PC-3 (cell line): ENCODE measurements at regions of chr10 and their contacts with region 1.

Region 1: DNA sequence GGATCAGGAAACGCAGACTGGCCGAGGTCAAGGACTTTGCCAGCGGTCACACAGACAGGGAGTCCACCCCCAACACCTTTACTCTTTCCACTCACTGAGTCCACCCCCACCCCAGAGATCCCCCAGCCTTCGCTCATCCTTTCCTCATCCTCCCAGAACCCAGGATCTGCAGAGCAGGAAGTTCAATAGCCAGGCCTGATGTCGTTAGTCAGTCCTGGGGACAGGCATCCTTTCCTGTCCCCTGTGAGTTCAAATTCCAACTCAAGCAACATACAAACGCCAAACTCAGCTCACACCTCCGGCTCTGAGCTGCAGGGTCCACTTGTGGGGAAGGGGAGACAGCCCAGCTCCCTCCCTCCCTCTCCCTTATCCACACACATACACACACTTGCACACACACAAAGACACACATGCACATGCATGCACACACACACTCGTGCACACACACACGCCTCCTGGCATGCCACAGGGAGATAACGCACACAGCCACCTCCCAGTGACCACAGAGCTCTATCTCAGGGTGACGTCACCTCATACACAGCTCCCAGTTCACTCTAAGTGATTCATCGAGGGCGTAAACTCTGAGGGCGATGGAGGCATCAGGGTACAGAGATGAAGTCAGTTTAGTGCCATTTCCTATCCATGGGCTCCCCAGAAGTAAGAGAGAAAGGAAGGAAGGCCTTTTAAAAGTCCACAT is 23.9 kb downstream of the CALML3 start:
- DNase-seq: peak; percentile 79
- ATAC-seq: peak; percentile 7
- H3K4me3 ChIP-seq: peak overlapping the region; percentile 26; the same call in 1 of the 2 replicates
- H3K27ac ChIP-seq: peak overlapping the region; percentile 100
- H3K4me1 ChIP-seq: peaks cover 90% of the 10 kb centered on the region
- H3K27me3 ChIP-seq: no peaks in the 10 kb centered on the region
- CTCF ChIP-seq: no peak

Region 2: DNA sequence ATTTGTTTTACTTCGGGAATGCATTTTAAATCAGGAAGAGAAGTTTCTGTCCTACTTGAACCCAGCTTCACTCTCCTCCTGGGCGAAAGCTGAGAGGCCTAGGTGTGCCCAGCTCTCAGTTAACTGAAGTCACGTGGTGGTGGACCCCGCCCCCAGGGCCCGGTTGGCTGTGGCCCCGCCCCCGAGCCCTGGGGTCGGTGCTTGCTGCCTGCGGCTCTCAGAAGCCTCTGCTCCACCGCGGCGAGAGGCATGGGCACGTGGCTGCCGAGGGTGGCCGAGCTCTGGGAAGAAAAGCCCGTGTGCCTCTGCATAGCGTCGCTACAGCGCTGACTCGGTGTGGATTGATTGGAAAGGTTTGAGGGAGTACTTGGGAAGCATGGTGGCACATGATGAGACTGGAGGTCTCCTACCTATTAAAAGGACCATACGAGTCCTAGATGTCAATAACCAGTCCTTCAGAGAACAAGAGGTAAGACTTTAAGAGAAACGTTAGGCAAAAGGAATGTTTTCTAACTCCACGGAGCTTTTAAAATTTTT is 102.2 kb before region 1 on chr10:
- CTCF ChIA-PET with region 1: interaction called, 3 read pairs
- POLR2A ChIA-PET with region 1: interaction called, 8 read pairs
- intact Hi-C with region 1: loop called (anchors 1 kb)
- DNase-seq: peak; percentile 83
- ATAC-seq: peak; percentile 88
- H3K4me3 ChIP-seq: peak overlapping the region; percentile 92
- H3K27ac ChIP-seq: peak overlapping the region; percentile 37; the same call in 1 of the 2 replicates
- H3K4me1 ChIP-seq: peaks cover 8% of the 10 kb centered on the region; the same call in 1 of the 2 replicates
- H3K27me3 ChIP-seq: no peaks in the 10 kb centered on the region
- CTCF ChIP-seq: no peak

Region 3: DNA sequence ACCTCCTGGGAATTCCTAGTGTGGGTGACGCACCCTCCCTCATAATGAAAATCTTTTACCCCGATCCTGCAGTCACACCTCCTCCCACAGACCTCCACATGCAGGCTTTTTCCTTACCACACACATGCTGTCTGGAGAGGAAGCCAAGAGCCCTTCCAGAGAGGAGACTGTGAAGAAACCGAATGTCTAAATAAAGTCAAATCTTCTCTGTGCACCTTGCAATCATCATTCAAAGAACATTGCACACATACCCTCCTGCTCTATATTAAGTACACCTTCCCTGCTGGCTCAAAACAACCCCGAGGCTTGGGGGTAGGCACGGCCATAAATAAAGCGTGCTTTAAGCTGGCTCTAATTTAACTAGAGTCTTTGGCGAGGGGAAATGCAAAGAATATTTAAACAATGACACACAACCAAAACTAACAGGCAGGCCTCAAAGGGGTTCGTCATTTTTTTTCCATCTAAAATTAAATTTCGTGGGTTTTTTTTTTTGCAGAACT is 11.0 kb after region 1 on chr10:
- CTCF ChIA-PET with region 1: no interaction called
- POLR2A ChIA-PET with region 1: interaction called, 3 read pairs
- intact Hi-C with region 1: loop called (anchors 1 kb)
- DNase-seq: peak; percentile 68
- ATAC-seq: peak; percentile 68
- H3K4me3 ChIP-seq: peak overlapping the region; percentile 46; the same call in 1 of the 2 replicates
- H3K27ac ChIP-seq: peak overlapping the region; percentile 99
- H3K4me1 ChIP-seq: peaks cover 41% of the 10 kb centered on the region
- H3K27me3 ChIP-seq: no peaks in the 10 kb centered on the region
- CTCF ChIP-seq: no peak

Region 4: DNA sequence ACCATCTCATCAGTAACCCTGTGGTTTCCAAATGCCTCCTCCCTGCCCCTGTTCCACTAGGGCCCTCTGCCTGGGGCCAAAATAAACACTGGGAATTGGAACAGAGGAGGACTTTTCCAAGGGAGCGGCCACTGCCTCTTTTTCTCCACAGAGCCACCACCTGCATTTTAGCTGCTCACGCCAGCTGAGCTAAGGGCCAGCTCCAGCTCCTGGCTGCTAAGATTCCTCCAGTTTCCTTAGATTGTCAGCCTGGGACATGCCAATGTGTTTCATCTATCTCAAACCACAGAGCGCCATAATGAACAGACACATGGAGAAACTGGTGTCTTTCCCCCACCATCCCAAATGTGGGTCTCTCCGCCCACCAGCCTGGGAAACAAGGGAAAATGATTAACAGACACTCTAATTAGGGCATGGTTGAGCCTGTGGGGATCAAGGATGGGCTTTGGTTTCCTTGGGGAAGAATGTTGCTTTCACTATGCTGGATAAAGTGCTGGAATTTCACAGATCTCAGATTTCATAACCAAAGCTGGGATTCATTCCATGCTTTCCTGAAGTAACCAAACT is 65.6 kb after region 1 on chr10:
- CTCF ChIA-PET with region 1: no interaction called
- POLR2A ChIA-PET with region 1: interaction called, 5 read pairs
- intact Hi-C with region 1: loop called (anchors 1 kb)
- DNase-seq: peak; percentile 38
- ATAC-seq: no peak
- H3K4me3 ChIP-seq: no peak overlapping the region
- H3K27ac ChIP-seq: peak overlapping the region; percentile 91
- H3K4me1 ChIP-seq: peaks cover 61% of the 10 kb centered on the region
- H3K27me3 ChIP-seq: no peaks in the 10 kb centered on the region
- CTCF ChIP-seq: no peak

Region 5: DNA sequence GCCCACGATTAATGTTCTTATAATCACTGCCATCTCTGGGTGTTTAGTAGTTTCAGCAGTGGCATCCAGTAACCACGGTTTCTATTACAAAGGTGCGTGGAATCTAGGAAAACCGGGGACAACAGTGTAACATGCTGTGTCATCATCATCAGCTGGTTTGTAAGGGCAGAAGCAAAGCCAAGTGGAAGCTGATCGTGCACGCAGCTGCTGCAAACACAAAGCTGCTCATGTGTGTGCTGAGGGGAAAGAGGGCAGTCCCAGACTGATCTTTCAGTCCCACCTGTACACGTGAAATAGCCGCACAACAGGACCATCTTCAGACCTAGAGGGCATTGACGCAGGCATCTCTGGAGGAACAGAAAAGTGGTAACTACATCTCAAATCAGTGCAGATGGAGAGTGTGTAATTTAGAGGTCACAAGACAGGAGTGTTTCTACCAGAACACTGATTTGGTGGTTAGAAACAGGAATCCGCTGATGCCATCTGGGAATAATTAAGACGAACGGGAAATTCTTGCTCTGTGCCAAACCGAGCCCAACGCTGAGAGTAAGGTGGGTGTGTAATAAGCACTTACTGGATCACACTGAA is 327.6 kb after region 1 on chr10:
- CTCF ChIA-PET with region 1: no interaction called
- POLR2A ChIA-PET with region 1: no interaction called
- intact Hi-C with region 1: no loop called
- DNase-seq: no peak
- ATAC-seq: no peak
- H3K4me3 ChIP-seq: no peak overlapping the region
- H3K27ac ChIP-seq: no peak overlapping the region
- H3K4me1 ChIP-seq: peaks cover 3% of the 10 kb centered on the region; the same call in 1 of the 2 replicates
- H3K27me3 ChIP-seq: no peaks in the 10 kb centered on the region
- CTCF ChIP-seq: no peak

Region 6: GRCh38 chr10:5889624-5890451 is 341.2 kb after region 1 on chr10 and contains the starts of genes ANKRD16 and FBH1:
- CTCF ChIA-PET with region 1: no interaction called
- POLR2A ChIA-PET with region 1: no interaction called
- intact Hi-C with region 1: no loop called
- DNase-seq: peak; percentile 93
- ATAC-seq: peak; percentile 86
- H3K4me3 ChIP-seq: peak within 1 kb of the TSS; percentile 77
- H3K27ac ChIP-seq: no peak within 1 kb of the TSS
- H3K4me1 ChIP-seq: peaks cover 4% of the 10 kb centered on the region
- H3K27me3 ChIP-seq: no peaks in the 10 kb centered on the region
- CTCF ChIP-seq: no peak
- total RNA-seq, gene ANKRD16: 4.9 and 7.2 TPM in 2 replicates
- total RNA-seq, gene FBH1: 22.0 and 33.2 TPM in 2 replicates